ENCODE measurements at regions of chr17 and their contacts with region 1.

Region 1: DNA sequence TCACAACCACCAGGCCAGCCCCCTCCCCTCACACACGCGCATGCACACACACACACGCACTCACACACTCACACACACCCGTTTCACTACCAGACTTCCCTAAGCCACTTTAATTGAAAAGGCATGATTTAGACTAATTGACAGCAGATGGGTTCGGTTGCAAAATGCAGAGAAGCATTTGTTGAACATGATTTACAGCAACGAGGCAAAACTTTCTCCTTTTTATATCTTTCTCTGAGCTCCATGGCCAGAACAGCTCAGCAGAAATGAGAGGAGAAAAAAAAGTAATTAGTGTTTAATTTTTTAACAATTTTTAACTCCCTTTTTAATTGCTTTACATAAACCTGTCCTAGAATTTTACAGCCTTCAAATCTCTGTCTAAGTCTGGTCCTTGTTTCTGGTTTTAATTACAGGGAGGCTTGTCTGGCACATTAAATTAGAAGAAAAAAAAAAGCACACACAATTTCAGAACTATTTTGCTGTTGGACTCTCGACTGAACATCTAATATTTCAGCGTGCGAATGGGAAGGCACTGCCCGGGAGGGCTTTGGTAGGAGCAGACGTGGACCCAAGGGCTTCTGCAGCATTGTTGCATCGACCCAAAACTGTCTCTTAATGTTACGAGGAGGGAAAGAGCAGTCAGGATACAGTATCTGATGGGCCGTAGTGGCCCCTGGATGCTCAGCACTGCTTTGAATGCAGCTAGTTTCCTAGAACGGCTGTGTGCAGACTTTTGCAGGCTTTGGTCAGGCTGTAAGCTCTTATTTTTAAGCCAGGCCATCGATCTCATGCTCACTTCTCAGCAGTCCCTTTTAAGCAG is 255.9 kb downstream of the SOX9 start:
- DNase-seq: no peak
- ATAC-seq: peak in 1 of 8 donors; percentile 31
- H3K4me3 ChIP-seq: no peak overlapping the region
- H3K27ac ChIP-seq: no peak overlapping the region
- H3K4me1 ChIP-seq: peaks cover 0 to 11% (median 0%) of the 10 kb centered on the region in 9 donors
- H3K27me3 ChIP-seq: peaks cover 0 to 18% (median 0%) of the 10 kb centered on the region in 7 donors
- CTCF ChIP-seq: no peak

Region 2: GRCh38 chr17:72338847-72339790 is 37.6 kb before region 1 on chr17:
- intact Hi-C with region 1: loop called in 1 of 10 experiments (anchors 5 kb)
- DNase-seq: peak in 1 of 2 donors; percentile 45
- ATAC-seq: peak; percentile 27 to 84 (median 68)
- H3K4me3 ChIP-seq: no peak overlapping the region
- H3K27ac ChIP-seq: peak overlapping the region in 5 of 10 donors; percentile 26 to 77 (median 75)
- H3K4me1 ChIP-seq: peaks cover 0 to 34% (median 17%) of the 10 kb centered on the region in 9 donors
- H3K27me3 ChIP-seq: peaks cover 0 to 56% (median 12%) of the 10 kb centered on the region in 7 donors
- CTCF ChIP-seq: no peak

Region 3: GRCh38 chr17:72479113-72479512 is 102.4 kb after region 1 on chr17:
- intact Hi-C with region 1: no loop called
- DNase-seq: no peak
- ATAC-seq: no peak
- H3K4me3 ChIP-seq: no peak overlapping the region
- H3K27ac ChIP-seq: no peak overlapping the region
- H3K4me1 ChIP-seq: no peaks in the 10 kb centered on the region
- H3K27me3 ChIP-seq: peaks cover 0 to 60% (median 16%) of the 10 kb centered on the region in 7 donors
- CTCF ChIP-seq: no peak